Mammary epithelial cell (primary cell): ENCODE measurements at regions of chr17 and their contacts with region 1.

Region 1: GRCh38 chr17:40664582-40665333 is at the start of gene KRT222:
- DNase-seq: no peak
- H3K4me3 ChIP-seq: peak within 1 kb of the TSS in 2 of 3 experiments; percentile 3 to 22
- H3K27ac ChIP-seq: no peak within 1 kb of the TSS
- H3K4me1 ChIP-seq: no peaks in the 10 kb centered on the region
- H3K27me3 ChIP-seq: no peaks in the 10 kb centered on the region
- CTCF ChIP-seq: no peak
- total RNA-seq, gene KRT222: 0.67 to 0.94 TPM

Region 2: GRCh38 chr17:40075201-40075941 is 589.4 kb before region 1 on chr17:
- CTCF ChIA-PET with region 1: no interaction called
- dilution Hi-C with region 1: no loop called
- in situ Hi-C with region 1: no loop called
- intact Hi-C with region 1: no loop called
- DNase-seq: peak; percentile 30
- H3K4me3 ChIP-seq: no peak overlapping the region
- H3K27ac ChIP-seq: no peak overlapping the region
- H3K4me1 ChIP-seq: peaks cover 31% of the 10 kb centered on the region
- H3K27me3 ChIP-seq: no peaks in the 10 kb centered on the region
- CTCF ChIP-seq: peak; percentile 77 to 94

Region 3: DNA sequence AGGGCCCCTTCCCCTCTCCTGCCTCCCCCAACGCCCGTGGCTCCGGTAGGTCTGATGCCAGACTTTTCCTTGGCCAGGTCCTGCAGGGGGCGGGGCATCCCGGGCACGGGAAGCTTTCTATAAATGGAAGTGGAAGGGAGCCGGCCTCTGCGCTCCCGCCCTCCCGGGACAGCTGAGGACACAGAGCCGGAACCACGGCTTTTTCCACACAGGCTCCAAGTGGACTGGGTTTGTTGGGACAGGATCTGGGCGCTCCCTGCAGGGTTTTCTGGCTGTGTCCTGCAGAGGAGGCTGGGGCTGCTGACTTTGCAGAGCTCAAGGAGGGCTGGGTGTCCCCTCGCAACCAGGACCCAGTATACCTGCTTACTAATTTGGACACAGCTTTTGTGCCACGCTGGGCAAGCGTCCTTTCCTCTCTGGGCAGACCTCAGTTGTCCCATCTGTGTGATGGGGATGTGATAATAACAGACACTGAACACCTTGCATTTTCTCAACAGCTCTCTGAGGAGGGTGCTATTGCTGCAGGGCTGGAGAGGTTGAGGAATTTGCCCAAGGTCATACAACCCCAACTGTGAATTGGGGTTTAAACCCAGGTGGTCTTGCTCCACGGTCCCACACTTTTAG is 165.1 kb before region 1 on chr17:
- CTCF ChIA-PET with region 1: no interaction called
- dilution Hi-C with region 1: no loop called
- in situ Hi-C with region 1: no loop called
- intact Hi-C with region 1: no loop called
- DNase-seq: peak; percentile 71
- H3K4me3 ChIP-seq: peak overlapping the region; percentile 69 to 98 (median 77)
- H3K27ac ChIP-seq: peak overlapping the region; percentile 96
- H3K4me1 ChIP-seq: peaks cover 37% of the 10 kb centered on the region
- H3K27me3 ChIP-seq: no peaks in the 10 kb centered on the region
- CTCF ChIP-seq: peak in 1 of 2 donors; percentile 16

Region 4: DNA sequence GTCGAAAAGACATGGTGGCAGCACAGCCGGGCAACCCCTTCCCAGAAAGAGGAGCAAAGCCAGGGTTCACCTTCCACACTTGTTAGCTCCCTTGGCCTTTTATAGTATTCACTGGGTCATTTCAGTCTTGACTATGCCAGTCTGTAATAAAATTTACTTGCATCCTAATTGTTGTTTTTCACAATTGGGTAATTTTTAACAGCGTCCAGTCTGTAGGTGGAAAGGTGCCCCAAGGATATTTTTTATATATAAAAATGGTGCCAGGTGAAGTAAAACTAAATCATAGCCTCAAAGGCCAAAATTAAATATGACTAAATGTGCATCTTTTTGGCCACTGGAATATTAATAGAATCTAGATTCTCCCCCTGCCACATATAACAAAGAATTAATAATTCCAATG is 107.3 kb after region 1 on chr17 and contains the start of gene KRT26:
- CTCF ChIA-PET with region 1: no interaction called
- dilution Hi-C with region 1: loop called (anchors 5 kb)
- in situ Hi-C with region 1: no loop called
- intact Hi-C with region 1: no loop called
- DNase-seq: no peak
- H3K4me3 ChIP-seq: no peak within 1 kb of the TSS
- H3K27ac ChIP-seq: no peak within 1 kb of the TSS
- H3K4me1 ChIP-seq: no peaks in the 10 kb centered on the region
- H3K27me3 ChIP-seq: peaks cover 3% of the 10 kb centered on the region
- CTCF ChIP-seq: no peak
- total RNA-seq, gene KRT26: not detected